T-cell (primary cell): ENCODE measurements at regions of chr22 and their contacts with region 1.

Region 1: GRCh38 chr22:31107178-31107893 is at the start of gene SELENOM:
- DNase-seq: peak; percentile 67 to 93 (median 80)
- ATAC-seq: peak; percentile 91 to 94 (median 94)
- H3K4me3 ChIP-seq: peak within 1 kb of the TSS; percentile 79 to 89
- H3K4me3 Mint-ChIP-seq: peak within 1 kb of the TSS; percentile 88 to 98 (median 96)
- H3K27ac ChIP-seq: peak within 1 kb of the TSS; percentile 63
- H3K27ac Mint-ChIP-seq: peak within 1 kb of the TSS; percentile 90 to 93
- H3K4me1 ChIP-seq: peaks cover 7 to 30% of the 10 kb centered on the region in 2 experiments
- H3K4me1 Mint-ChIP-seq: peaks cover 22 to 28% (median 26%) of the 10 kb centered on the region in 3 donors
- H3K27me3 ChIP-seq: no peaks in the 10 kb centered on the region
- H3K27me3 Mint-ChIP-seq: peaks cover 0 to 3% of the 10 kb centered on the region in 2 donors
- total RNA-seq, gene SELENOM: 46.4 to 67.8 (median 53.7) TPM

Region 2: DNA sequence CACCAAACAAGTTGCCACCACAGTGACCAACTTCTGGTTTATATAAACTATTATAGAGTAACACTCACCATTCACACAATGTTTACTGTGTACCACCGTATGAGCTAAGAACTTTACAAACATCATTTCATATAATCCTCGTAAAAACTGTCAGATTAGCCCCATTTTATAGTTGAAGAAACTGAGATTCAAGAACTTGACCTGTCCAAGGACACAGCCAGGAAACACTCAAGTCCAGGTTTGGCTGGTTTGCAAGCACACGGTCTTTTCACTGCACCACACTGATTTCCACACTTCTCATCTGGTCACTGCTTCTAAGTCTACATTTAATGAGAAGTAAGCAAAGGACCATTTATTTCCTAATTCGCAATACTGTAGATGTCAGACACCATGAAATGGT is 142.5 kb before region 1 on chr22:
- CTCF ChIA-PET with region 1: interaction called in 1 of 2 experiments, 3 read pairs
- POLR2A ChIA-PET with region 1: interaction called, 3 to 13 read pairs
- DNase-seq: no peak
- ATAC-seq: no peak
- H3K4me3 ChIP-seq: no peak overlapping the region
- H3K4me3 Mint-ChIP-seq: no peak overlapping the region
- H3K27ac ChIP-seq: no peak overlapping the region
- H3K27ac Mint-ChIP-seq: no peak overlapping the region
- H3K4me1 ChIP-seq: peaks cover under 1 to 10% of the 10 kb centered on the region in 2 experiments
- H3K4me1 Mint-ChIP-seq: peaks cover 19 to 43% (median 33%) of the 10 kb centered on the region in 3 donors
- H3K27me3 ChIP-seq: no peaks in the 10 kb centered on the region
- H3K27me3 Mint-ChIP-seq: no peaks in the 10 kb centered on the region